Posterior vena cava (tissue), 2 donors: ENCODE measurements at regions of chr1 and their contacts with region 1.

Region 1: DNA sequence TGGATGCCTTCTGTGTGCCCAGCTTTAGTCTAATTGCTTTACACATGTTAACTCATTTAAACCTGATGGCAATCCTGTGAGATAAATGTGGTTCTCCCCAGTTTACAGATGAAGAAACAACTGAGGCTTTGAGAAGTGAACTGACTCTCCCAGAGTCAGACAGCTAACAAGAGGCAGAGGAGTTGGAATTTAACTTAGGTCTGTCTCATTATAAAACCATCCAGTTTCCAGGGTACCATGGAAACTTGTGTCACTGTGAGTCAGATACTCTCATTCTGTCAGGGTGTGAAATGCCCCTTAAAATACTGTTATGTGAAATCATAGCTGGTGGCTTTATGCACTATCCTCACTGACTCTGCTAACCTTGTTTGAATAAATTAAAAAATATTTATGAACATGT is 206.6 kb downstream of the PBX1 start:
- DNase-seq: no peak

Region 2: DNA sequence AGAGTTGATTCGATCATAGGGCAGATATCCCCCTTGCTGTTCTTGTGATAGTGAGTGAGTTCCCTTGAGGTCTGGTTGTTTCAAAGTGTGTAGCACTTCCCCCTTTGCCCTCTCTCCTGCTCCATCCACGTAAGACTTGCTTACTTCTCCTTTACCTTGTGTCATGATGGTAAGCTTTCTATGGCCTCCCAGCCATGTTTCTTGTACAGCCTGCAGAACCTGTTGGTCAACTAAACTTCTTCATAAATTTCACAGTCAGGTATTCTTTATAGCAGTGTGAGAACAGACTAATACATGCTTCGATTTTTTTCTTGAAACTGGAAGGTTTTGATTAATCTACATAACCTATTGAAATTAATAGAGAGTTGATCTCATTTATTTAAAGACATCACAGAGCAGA is 509.1 kb before region 1 on chr1:
- intact Hi-C with region 1: no loop called
- DNase-seq: no peak

Region 3: GRCh38 chr1:164716992-164717703 is 48.4 kb before region 1 on chr1:
- intact Hi-C with region 1: loop called in 1 of 2 experiments (anchors 10 kb)
- DNase-seq: no peak

Region 4: DNA sequence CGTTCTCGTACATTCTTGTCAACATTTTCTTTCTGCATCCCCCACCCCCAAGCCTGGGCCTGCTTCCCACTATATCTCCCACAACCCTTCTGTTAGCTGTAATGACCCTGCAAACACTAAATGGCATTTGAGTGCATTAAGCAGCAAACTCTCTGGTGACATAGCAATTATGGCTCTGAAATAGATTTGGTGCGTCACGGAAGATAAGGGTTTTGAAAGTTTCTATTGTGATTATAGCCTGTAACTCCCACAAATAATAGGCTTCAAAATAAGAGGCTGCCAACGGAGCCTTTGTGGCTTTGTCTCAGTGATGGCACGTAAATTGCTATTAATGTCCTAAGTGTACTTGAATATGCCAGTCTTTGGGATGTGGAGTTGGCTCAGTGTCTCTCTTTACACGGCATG is 71.1 kb after region 1 on chr1:
- intact Hi-C with region 1: no loop called
- DNase-seq: no peak